CD4-positive, alpha-beta memory T cell (primary cell): ENCODE measurements at regions of chr16 and their contacts with region 1.

Region 1: GRCh38 chr16:88452482-88453216 is 431 bp upstream of the ZFPM1 start:
- DNase-seq: peak; percentile 96 to 100 (median 97)
- H3K4me3 ChIP-seq: peak overlapping the region in 1 of 2 donors; percentile 57
- H3K4me3 Mint-ChIP-seq: peak overlapping the region; percentile 83 to 91 (median 86)
- H3K27ac ChIP-seq: peak overlapping the region; percentile 40
- H3K27ac Mint-ChIP-seq: peak overlapping the region; percentile 75 to 96 (median 92)
- H3K4me1 ChIP-seq: peaks cover 28% of the 10 kb centered on the region
- H3K4me1 Mint-ChIP-seq: peaks cover 11 to 44% (median 24%) of the 10 kb centered on the region in 4 donors
- H3K27me3 ChIP-seq: no peaks in the 10 kb centered on the region
- H3K27me3 Mint-ChIP-seq: no peaks in the 10 kb centered on the region

Region 2: GRCh38 chr16:88464447-88465318 is 12.0 kb after region 1 on chr16:
- CTCF ChIA-PET with region 1: interaction called, 5 read pairs
- POLR2A ChIA-PET with region 1: interaction called, 11 read pairs
- intact Hi-C with region 1: no loop called
- DNase-seq: peak in 1 of 5 donors; percentile 20
- H3K4me3 ChIP-seq: no peak overlapping the region
- H3K4me3 Mint-ChIP-seq: peak overlapping the region in 6 of 8 donors; percentile 10 to 59 (median 22)
- H3K27ac ChIP-seq: peak overlapping the region; percentile 39
- H3K27ac Mint-ChIP-seq: peak overlapping the region in 6 of 7 donors; percentile 46 to 81 (median 76)
- H3K4me1 ChIP-seq: peaks cover 89% of the 10 kb centered on the region
- H3K4me1 Mint-ChIP-seq: peaks cover 20 to 77% (median 56%) of the 10 kb centered on the region in 4 donors
- H3K27me3 ChIP-seq: no peaks in the 10 kb centered on the region
- H3K27me3 Mint-ChIP-seq: no peaks in the 10 kb centered on the region

Region 3: GRCh38 chr16:88479793-88480760 is 27.4 kb after region 1 on chr16:
- CTCF ChIA-PET with region 1: no interaction called
- POLR2A ChIA-PET with region 1: interaction called, 16 read pairs
- intact Hi-C with region 1: loop called (anchors 2 kb)
- DNase-seq: peak in 3 of 5 donors; percentile 38 to 60 (median 50)
- H3K4me3 ChIP-seq: no peak overlapping the region
- H3K4me3 Mint-ChIP-seq: peak overlapping the region in 5 of 8 donors; percentile 21 to 68 (median 46)
- H3K27ac ChIP-seq: no peak overlapping the region
- H3K27ac Mint-ChIP-seq: peak overlapping the region in 6 of 7 donors; percentile 48 to 90 (median 84)
- H3K4me1 ChIP-seq: peaks cover 48% of the 10 kb centered on the region
- H3K4me1 Mint-ChIP-seq: peaks cover 19 to 56% (median 39%) of the 10 kb centered on the region in 4 donors
- H3K27me3 ChIP-seq: no peaks in the 10 kb centered on the region
- H3K27me3 Mint-ChIP-seq: no peaks in the 10 kb centered on the region

Region 4: DNA sequence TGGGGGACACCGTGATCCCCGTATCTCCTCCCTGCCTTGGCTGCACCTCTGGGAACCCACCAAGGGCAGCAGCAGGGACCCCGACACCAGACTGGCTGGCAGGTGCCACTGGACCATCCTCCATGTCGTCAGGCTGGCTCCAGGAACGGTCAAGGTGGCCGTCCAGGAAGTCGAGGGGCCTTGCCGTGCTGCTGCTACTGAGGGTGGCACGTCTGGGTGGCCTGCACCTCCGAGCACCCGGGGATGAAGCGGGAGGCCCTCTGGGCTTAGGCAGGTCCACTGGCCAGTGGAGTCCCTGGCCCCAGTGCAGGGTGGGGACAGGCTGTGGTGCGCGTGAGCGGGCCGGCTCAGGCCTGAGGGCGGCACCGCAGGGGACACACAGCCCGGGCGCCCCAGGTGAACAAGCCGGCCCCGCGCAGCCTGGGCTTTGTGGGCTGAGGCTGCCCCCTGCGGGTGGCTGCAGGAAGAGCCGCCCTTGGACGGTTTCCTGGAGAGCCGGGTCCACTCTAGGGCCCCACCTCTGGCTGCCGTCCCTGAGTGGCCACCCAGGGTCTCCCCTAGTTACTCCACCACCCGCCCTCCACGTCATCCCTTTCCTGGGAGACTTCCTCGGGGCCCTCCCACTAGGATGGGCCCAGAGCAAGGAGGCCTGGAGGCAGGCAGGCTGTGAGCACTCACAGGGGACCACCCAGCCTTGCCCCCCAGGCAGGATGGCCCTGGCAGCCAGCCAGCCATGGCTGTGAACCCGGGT is 74.7 kb after region 1 on chr16:
- CTCF ChIA-PET with region 1: no interaction called
- POLR2A ChIA-PET with region 1: interaction called, 3 read pairs
- intact Hi-C with region 1: loop called (anchors 5 kb)
- DNase-seq: peak in 4 of 5 donors; percentile 46 to 70 (median 56)
- H3K4me3 ChIP-seq: no peak overlapping the region
- H3K4me3 Mint-ChIP-seq: no peak overlapping the region
- H3K27ac ChIP-seq: no peak overlapping the region
- H3K27ac Mint-ChIP-seq: no peak overlapping the region
- H3K4me1 ChIP-seq: no peaks in the 10 kb centered on the region
- H3K4me1 Mint-ChIP-seq: peaks cover 2 to 14% (median 4%) of the 10 kb centered on the region in 4 donors
- H3K27me3 ChIP-seq: no peaks in the 10 kb centered on the region
- H3K27me3 Mint-ChIP-seq: no peaks in the 10 kb centered on the region

Region 5: DNA sequence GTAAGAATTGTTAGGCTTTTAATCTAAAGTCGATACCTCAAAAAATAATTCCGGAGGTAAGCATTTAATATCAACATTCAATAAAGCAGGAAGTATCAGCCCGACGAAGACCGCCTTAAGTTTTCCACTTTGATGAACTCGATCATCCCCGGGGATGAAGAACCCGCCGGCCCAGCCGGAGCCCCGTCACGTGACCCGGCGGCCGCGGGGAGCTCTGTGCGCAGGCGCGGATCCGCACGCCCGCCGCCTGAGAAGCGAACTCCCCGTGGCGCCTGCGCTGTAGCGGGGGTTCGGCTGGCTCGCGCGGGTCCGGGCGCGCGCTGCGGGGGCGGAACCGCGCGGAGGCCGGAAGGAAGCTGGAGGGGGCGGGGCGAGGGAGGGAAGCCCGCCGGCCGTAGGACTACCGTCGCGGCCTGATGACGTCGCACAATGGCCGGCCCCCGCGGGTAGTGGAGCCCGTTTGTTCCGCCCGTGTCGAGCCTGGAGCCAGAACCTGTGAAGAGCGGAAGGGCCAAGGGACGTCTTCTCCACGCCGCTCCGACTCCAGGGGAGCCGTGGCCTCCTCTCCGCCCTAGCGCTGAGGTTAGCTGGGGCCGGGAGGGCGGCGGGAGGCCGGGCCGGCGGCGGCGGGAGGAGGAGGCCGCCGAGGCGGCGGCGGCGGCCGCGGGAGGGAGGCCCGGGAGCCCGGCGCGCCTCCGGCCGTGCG is 117.5 kb after region 1 on chr16 and contains the start of gene ZC3H18:
- CTCF ChIA-PET with region 1: interaction called, 5 read pairs
- POLR2A ChIA-PET with region 1: interaction called, 16 read pairs
- intact Hi-C with region 1: loop called (anchors 1 kb)
- DNase-seq: peak; percentile 93 to 96 (median 96)
- H3K4me3 ChIP-seq: peak within 1 kb of the TSS; percentile 54 to 84
- H3K4me3 Mint-ChIP-seq: peak within 1 kb of the TSS; percentile 85 to 91 (median 90)
- H3K27ac ChIP-seq: peak within 1 kb of the TSS; percentile 76
- H3K27ac Mint-ChIP-seq: peak within 1 kb of the TSS; percentile 87 to 95 (median 90)
- H3K4me1 ChIP-seq: peaks cover 24% of the 10 kb centered on the region
- H3K4me1 Mint-ChIP-seq: peaks cover 14 to 40% (median 26%) of the 10 kb centered on the region in 4 donors
- H3K27me3 ChIP-seq: no peaks in the 10 kb centered on the region
- H3K27me3 Mint-ChIP-seq: no peaks in the 10 kb centered on the region
- total RNA-seq, gene ZC3H18: 84.5 to 91.5 TPM

Region 6: GRCh38 chr16:88700636-88701482 is 248.2 kb after region 1 on chr16:
- CTCF ChIA-PET with region 1: no interaction called
- POLR2A ChIA-PET with region 1: interaction called, 3 read pairs
- intact Hi-C with region 1: loop called (anchors 5 kb)
- DNase-seq: peak; percentile 95 to 99 (median 97)
- H3K4me3 ChIP-seq: peak overlapping the region; percentile 78 to 98
- H3K4me3 Mint-ChIP-seq: peak overlapping the region; percentile 93 to 96 (median 96)
- H3K27ac ChIP-seq: peak overlapping the region; percentile 85
- H3K27ac Mint-ChIP-seq: peak overlapping the region; percentile 97 to 99 (median 98)
- H3K4me1 ChIP-seq: peaks cover 79% of the 10 kb centered on the region
- H3K4me1 Mint-ChIP-seq: peaks cover 19 to 74% (median 50%) of the 10 kb centered on the region in 4 donors
- H3K27me3 ChIP-seq: no peaks in the 10 kb centered on the region
- H3K27me3 Mint-ChIP-seq: no peaks in the 10 kb centered on the region